HCT116 (cell line): ENCODE measurements at regions of chr9 and their contacts with region 1.

Region 1: GRCh38 chr9:6055213-6055612 is 39.8 kb upstream of the RANBP6 start:
- DNase-seq: peak; percentile 89
- ATAC-seq: peak; percentile 77
- H3K4me3 ChIP-seq: no peak overlapping the region
- H3K27ac ChIP-seq: no peak overlapping the region
- H3K4me1 ChIP-seq: no peaks in the 10 kb centered on the region
- H3K27me3 ChIP-seq: no peaks in the 10 kb centered on the region
- CTCF ChIP-seq: peak; percentile 56 to 87 (median 70); a peak in 5 of 6 replicates
- POLR2A ChIP-seq: no peak
- RAD21 ChIP-seq: peak; percentile 93

Region 2: GRCh38 chr9:5799314-5799713 is 255.9 kb before region 1 on chr9:
- CTCF ChIA-PET with region 1: interaction called, 24 read pairs
- POLR2A ChIA-PET with region 1: no interaction called
- RAD21 ChIA-PET with region 1: interaction called, 5 to 6 read pairs
- intact Hi-C with region 1: loop called (anchors 1 kb)
- DNase-seq: peak; percentile 16
- ATAC-seq: no peak
- H3K4me3 ChIP-seq: no peak overlapping the region
- H3K27ac ChIP-seq: no peak overlapping the region
- H3K4me1 ChIP-seq: no peaks in the 10 kb centered on the region
- H3K27me3 ChIP-seq: no peaks in the 10 kb centered on the region
- CTCF ChIP-seq: peak; percentile 64 to 68 (median 67); a peak in 5 of 6 replicates
- POLR2A ChIP-seq: no peak
- RAD21 ChIP-seq: peak; percentile 78

Region 3: DNA sequence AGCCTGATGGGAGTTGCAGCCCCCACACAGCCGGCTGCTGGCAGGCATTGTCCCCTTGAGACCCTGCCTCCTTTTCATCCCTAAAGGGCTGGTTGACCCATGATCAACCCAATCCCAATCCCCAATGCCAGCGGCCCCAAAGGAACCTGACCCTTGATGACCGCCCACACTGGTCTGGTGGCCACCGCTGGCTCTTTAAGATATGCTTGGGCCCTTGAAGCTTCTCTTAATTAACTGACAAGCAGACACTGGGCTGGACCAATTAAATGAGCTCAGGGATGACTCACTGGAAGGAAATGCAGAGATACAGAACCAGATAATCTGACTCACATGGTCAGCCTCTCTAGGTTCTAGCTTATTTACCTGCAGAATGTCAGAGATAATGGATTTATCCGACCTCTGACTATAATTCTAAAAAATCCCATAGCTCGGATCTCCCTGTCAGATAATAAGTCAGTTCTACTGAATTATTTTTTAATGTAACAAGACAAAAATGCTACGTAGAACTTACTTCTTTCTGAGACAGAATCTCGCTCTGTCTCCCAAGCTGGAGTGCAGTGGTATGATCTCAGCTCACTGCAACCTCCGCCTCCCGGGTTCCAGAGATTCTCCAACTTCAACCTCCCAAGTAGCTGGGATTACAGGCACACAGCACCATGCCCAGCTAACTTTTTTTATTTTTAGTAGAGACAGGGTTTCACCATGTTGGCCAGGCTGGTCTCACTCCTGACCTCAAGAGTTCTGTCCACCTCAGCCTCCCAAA is 175.6 kb before region 1 on chr9:
- CTCF ChIA-PET with region 1: interaction called, 52 read pairs
- POLR2A ChIA-PET with region 1: no interaction called
- RAD21 ChIA-PET with region 1: interaction called in 1 of 2 experiments, 4 read pairs
- intact Hi-C with region 1: no loop called
- DNase-seq: peak; percentile 88
- ATAC-seq: peak; percentile 94
- H3K4me3 ChIP-seq: peak overlapping the region; percentile 25 to 44
- H3K27ac ChIP-seq: peak overlapping the region; percentile 57; the same call in 1 of the 2 replicates
- H3K4me1 ChIP-seq: peaks cover 12 to 43% of the 10 kb centered on the region in 2 experiments; a peak in 3 of 4 replicates
- H3K27me3 ChIP-seq: no peaks in the 10 kb centered on the region
- CTCF ChIP-seq: no peak
- POLR2A ChIP-seq: no peak
- RAD21 ChIP-seq: 0 out of 2 replicates have a peak, but pooled peaks have one; percentile 13

Region 4: DNA sequence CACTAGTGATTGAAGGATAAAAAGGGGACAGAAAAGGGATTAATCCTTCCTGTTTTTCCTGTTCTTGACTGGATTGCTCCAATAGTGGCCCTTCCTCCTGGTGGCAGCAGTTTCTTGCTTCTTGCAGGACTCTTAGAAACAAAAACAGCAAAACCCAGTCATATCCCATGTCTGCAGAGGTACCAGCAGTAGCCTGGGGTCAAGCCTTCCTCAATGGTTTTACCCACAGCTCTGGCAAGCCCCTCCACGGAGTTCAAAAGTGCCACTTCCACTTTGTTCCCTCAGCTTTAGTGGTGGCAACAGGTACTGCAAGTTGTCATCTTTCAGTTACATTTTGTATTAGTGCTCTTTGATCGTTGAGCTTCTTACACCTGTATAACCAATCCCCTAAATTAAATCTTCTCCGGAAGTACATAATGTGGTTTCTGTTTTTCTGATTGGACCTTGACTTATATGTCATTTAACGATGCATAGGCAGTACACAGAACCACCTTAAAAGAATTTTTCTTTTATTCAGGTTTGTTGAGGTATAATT is 31.1 kb before region 1 on chr9:
- CTCF ChIA-PET with region 1: interaction called, 12 read pairs
- POLR2A ChIA-PET with region 1: no interaction called
- RAD21 ChIA-PET with region 1: no interaction called
- intact Hi-C with region 1: no loop called
- DNase-seq: peak; percentile 66
- ATAC-seq: peak; percentile 94
- H3K4me3 ChIP-seq: peak overlapping the region in 1 of 2 experiments; percentile 36; a peak in 2 of 4 replicates
- H3K27ac ChIP-seq: peak overlapping the region; percentile 19; the same call in 1 of the 2 replicates
- H3K4me1 ChIP-seq: peaks cover 3 to 10% of the 10 kb centered on the region in 2 experiments; a peak in 3 of 4 replicates
- H3K27me3 ChIP-seq: no peaks in the 10 kb centered on the region
- CTCF ChIP-seq: peak; percentile 37 to 67 (median 67); a peak in 5 of 6 replicates
- POLR2A ChIP-seq: no peak
- RAD21 ChIP-seq: no peak

Region 5: DNA sequence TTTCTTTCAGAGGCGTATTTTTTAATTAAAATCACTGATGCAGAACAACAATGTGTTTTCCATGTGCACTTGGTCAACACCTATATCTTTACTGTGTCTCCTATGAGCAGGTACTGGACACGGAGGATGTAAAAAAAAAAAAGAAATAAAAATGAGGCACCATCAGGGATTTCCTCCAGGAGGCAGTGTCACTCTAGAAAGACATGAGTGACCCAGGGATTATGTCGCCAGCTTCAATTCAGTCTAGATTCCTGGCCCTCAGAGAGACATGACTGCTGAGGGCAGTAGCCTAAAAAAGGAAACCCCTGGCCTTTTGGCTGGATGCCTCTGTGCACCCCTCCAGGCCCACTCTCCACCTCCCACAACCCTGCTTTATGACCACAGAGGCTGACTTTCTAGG is 142.1 kb after region 1 on chr9:
- CTCF ChIA-PET with region 1: interaction called, 10 read pairs
- POLR2A ChIA-PET with region 1: no interaction called
- RAD21 ChIA-PET with region 1: no interaction called
- intact Hi-C with region 1: loop called (anchors 10 kb)
- DNase-seq: peak; percentile 12
- ATAC-seq: peak; percentile 62
- H3K4me3 ChIP-seq: no peak overlapping the region
- H3K27ac ChIP-seq: no peak overlapping the region
- H3K4me1 ChIP-seq: no peaks in the 10 kb centered on the region
- H3K27me3 ChIP-seq: no peaks in the 10 kb centered on the region
- CTCF ChIP-seq: peak; percentile 15 to 50 (median 32); a peak in 4 of 6 replicates
- POLR2A ChIP-seq: no peak
- RAD21 ChIP-seq: peak; percentile 53

Region 6: DNA sequence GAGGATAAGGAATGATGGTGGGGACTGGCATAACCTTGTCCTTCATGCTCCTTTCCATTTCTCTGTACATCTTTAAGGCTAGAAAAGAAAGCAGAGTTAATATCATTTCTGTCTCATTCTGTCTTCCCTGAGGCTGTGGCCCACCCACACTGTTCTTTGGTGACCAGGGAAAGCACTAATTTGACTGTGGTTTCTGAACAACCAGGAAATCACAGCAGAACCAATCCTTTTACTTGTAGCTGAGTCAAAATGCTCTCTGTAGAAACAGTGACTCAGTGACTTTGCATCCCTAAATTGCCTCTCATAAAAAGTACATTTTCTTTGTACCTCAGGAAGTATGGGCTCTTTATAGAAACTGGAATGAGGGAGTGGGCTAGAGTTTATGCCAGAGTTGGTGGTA is 188.5 kb after region 1 on chr9:
- CTCF ChIA-PET with region 1: no interaction called
- POLR2A ChIA-PET with region 1: no interaction called
- RAD21 ChIA-PET with region 1: no interaction called
- intact Hi-C with region 1: no loop called
- DNase-seq: no peak
- ATAC-seq: no peak
- H3K4me3 ChIP-seq: no peak overlapping the region
- H3K27ac ChIP-seq: no peak overlapping the region
- H3K4me1 ChIP-seq: 0 out of 4 replicates have a peak, but pooled peaks cover 0 to 3% of the 10 kb centered on the region in 2 experiments
- H3K27me3 ChIP-seq: no peaks in the 10 kb centered on the region
- CTCF ChIP-seq: no peak
- POLR2A ChIP-seq: no peak
- RAD21 ChIP-seq: no peak

Region 7: GRCh38 chr9:6566409-6567139 is 511.4 kb after region 1 on chr9:
- CTCF ChIA-PET with region 1: interaction called, 16 read pairs
- POLR2A ChIA-PET with region 1: no interaction called
- RAD21 ChIA-PET with region 1: no interaction called
- intact Hi-C with region 1: loop called (anchors 1 kb)
- DNase-seq: peak; percentile 95
- ATAC-seq: peak; percentile 85
- H3K4me3 ChIP-seq: peak overlapping the region; percentile 24 to 28
- H3K27ac ChIP-seq: peak overlapping the region; percentile 93
- H3K4me1 ChIP-seq: peaks cover 33 to 56% of the 10 kb centered on the region in 2 experiments
- H3K27me3 ChIP-seq: no peaks in the 10 kb centered on the region
- CTCF ChIP-seq: no peak
- POLR2A ChIP-seq: no peak
- RAD21 ChIP-seq: no peak

Region 8: DNA sequence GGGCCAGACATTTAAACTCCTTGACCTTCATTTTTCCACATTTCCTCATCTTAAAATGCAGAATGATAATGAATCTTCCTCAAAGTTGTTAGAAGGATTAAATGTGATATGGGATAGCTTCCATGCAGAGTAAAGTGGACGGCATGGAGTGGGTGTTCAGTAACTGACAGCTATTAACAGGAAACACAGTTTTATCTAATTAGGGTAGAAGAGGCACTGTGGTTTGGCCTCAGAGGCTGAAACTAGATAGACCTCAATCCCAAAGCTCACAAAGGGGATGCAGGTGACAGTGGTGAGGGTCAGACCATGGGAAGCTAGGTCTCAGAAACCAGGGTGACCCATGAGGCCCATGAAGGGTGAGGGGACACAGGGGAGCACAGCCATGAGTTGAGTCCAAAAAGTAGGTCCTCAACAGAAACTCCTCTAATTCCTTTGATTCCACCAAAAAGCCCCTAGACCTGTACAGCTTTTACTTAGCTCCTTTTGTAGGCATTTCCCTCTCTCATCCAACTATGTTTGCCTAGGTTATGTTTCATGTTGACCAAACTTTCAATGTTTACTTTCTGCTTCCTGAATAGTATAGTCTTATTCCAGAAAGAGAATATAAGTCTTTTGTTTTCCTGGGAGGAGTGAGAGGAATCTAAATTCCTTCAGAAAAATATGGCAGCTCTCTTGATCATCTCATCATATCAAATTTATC is 618.3 kb after region 1 on chr9:
- CTCF ChIA-PET with region 1: no interaction called
- POLR2A ChIA-PET with region 1: no interaction called
- RAD21 ChIA-PET with region 1: no interaction called
- intact Hi-C with region 1: loop called (anchors 10 kb)
- DNase-seq: no peak
- ATAC-seq: no peak
- H3K4me3 ChIP-seq: no peak overlapping the region
- H3K27ac ChIP-seq: no peak overlapping the region
- H3K4me1 ChIP-seq: no peaks in the 10 kb centered on the region
- H3K27me3 ChIP-seq: no peaks in the 10 kb centered on the region
- CTCF ChIP-seq: no peak
- POLR2A ChIP-seq: no peak
- RAD21 ChIP-seq: no peak